GM12878 (cell line): ENCODE measurements at regions of chr1 and their contacts with region 1.

Region 1: GRCh38 chr1:23577056-23578004 is 18.0 kb upstream of the ID3 start:
- DNase-seq: peak; percentile 92
- ATAC-seq: peak; percentile 80
- H3K4me3 ChIP-seq: peak overlapping the region; percentile 61; the same call in 1 of the 2 replicates
- H3K27ac ChIP-seq: peak overlapping the region; percentile 96
- H3K4me1 ChIP-seq: peaks cover 53% of the 10 kb centered on the region
- H3K27me3 ChIP-seq: no peaks in the 10 kb centered on the region
- CTCF ChIP-seq: no peak
- EP300 ChIP-seq: peak; percentile 75 to 85; a peak in 3 of 4 replicates
- POLR2A ChIP-seq: 0 out of 2 replicates have a peak, but pooled peaks have one; percentile 20
- RAD21 ChIP-seq: peak; percentile 31; the same call in 1 of the 2 replicates

Region 2: DNA sequence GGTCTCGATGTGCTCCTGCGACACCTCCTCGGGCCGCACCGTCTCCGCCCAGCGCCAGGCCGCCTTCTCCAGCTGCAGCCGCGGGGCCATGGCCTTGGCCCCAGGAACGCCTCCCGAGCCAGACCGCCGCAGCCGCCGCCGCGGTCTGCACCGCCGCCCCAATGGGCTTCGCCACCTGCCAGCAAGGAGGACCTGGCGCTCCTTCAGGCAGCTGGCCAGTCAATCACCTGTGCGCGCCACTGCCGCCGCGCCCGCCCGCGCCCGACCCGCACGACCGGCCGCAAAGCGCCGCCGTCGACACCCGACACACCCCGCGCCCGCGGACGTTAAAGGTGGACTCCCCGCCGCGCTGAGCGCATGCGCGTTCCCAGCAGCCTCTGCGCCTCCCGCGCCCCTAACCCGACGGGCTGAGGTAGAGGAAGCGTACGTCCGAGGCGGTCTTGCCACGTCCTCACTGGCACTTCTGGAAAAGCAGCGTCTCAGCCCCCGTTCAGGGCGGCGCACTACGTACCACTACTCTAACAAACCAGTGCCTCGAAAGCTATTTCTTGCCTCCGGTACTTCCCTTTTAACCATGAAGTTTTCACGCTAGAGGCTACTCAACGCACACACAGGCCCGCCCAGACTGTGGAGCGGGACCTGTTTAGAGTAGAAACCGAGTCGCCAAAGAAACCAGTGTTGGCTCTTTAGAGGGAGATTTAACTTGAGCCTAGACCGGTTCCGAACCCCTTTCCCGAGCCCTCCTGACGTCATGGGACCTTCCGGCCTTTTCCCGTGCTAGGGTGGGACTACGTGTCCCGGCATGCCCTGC is 1794.3 kb before region 1 on chr1 and contains the start of gene USP48:
- CTCF ChIA-PET with region 1: no interaction called
- POLR2A ChIA-PET with region 1: no interaction called
- RAD21 ChIA-PET with region 1: no interaction called
- SMC1A ChIA-PET with region 1: no interaction called
- in situ Hi-C with region 1: loop called (anchors 25 kb)
- intact Hi-C with region 1: no loop called
- DNase-seq: peak; percentile 87
- ATAC-seq: peak; percentile 78
- H3K4me3 ChIP-seq: peak within 1 kb of the TSS; percentile 73
- H3K27ac ChIP-seq: peak within 1 kb of the TSS; percentile 100
- H3K4me1 ChIP-seq: 0 out of 2 replicates have a peak, but pooled peaks cover 4% of the 10 kb centered on the region
- H3K27me3 ChIP-seq: no peaks in the 10 kb centered on the region
- CTCF ChIP-seq: no peak
- EP300 ChIP-seq: peak in 1 of 2 experiments; percentile 22; a peak in 1 of 4 replicates
- POLR2A ChIP-seq: peak; percentile 100
- RAD21 ChIP-seq: 0 out of 2 replicates have a peak, but pooled peaks have one; percentile 1
- polyA plus RNA-seq, gene USP48: 21.2 to 39.0 TPM

Region 3: GRCh38 chr1:23548704-23549143 is 28.6 kb before region 1 on chr1:
- CTCF ChIA-PET with region 1: interaction called, 112 read pairs
- POLR2A ChIA-PET with region 1: interaction called, 49 read pairs
- RAD21 ChIA-PET with region 1: interaction called, 47 read pairs
- SMC1A ChIA-PET with region 1: interaction called, 216 read pairs
- in situ Hi-C with region 1: no loop called
- intact Hi-C with region 1: no loop called
- DNase-seq: no peak
- ATAC-seq: peak; percentile 52
- H3K4me3 ChIP-seq: no peak overlapping the region
- H3K27ac ChIP-seq: no peak overlapping the region
- H3K4me1 ChIP-seq: peaks cover 21% of the 10 kb centered on the region
- H3K27me3 ChIP-seq: no peaks in the 10 kb centered on the region
- CTCF ChIP-seq: no peak
- EP300 ChIP-seq: no peak
- POLR2A ChIP-seq: no peak
- RAD21 ChIP-seq: no peak

Region 4: GRCh38 chr1:23598424-23598823 is 21.1 kb after region 1 on chr1:
- CTCF ChIA-PET with region 1: interaction called, 64 read pairs
- POLR2A ChIA-PET with region 1: interaction called, 271 read pairs
- RAD21 ChIA-PET with region 1: interaction called, 252 read pairs
- SMC1A ChIA-PET with region 1: interaction called, 419 read pairs
- in situ Hi-C with region 1: no loop called
- intact Hi-C with region 1: loop called (anchors 1 kb)
- DNase-seq: no peak
- ATAC-seq: no peak
- H3K4me3 ChIP-seq: no peak overlapping the region
- H3K27ac ChIP-seq: no peak overlapping the region
- H3K4me1 ChIP-seq: peaks cover 79% of the 10 kb centered on the region
- H3K27me3 ChIP-seq: no peaks in the 10 kb centered on the region
- CTCF ChIP-seq: no peak
- EP300 ChIP-seq: no peak
- POLR2A ChIP-seq: no peak
- RAD21 ChIP-seq: no peak

Region 5: DNA sequence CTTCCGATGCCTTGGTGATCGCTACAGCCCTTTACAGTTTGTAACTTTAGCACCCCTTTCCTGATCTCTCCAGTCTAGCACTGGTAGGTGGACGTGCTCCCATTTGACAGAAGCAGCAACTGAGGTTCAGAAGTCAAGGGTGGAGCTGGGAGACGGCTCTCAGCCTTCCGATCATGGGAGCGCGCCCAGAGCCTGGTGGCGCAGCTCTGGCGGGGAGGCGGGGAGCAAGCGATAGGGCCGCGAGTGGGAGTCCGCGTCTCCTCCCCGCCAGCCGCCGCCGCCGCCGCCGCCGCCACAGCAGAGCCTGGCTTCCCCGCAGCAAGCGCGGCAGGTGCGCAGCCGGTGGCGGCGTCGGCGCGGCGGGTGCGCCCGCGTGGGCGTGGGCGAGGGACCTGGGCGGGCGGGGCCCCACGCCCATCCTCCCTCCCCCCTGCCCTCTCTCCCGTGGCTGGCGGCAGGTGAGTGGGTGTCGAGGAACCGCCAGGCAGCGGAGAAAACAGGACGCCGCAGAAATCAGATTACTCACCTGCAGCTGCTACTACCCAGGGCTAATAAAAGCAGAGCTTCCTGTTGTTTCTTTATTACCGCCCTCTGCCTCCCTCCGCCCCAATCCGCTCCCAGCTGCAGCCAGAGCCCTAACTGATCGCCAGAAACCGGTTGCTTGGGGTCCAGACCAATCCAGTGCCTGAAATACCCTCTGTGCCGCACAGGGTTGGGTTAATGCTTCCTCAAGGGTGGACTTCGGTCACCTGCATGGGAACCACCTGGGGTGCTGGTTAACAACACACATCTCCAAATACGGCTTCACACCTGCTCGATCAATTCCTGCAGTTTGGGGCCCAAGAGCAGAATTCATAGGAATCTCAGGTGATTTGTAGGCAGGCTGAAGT is 42.2 kb after region 1 on chr1:
- CTCF ChIA-PET with region 1: interaction called, 10 read pairs
- POLR2A ChIA-PET with region 1: interaction called, 24 read pairs
- RAD21 ChIA-PET with region 1: interaction called, 11 read pairs
- SMC1A ChIA-PET with region 1: interaction called, 24 read pairs
- in situ Hi-C with region 1: no loop called
- intact Hi-C with region 1: no loop called
- DNase-seq: no peak
- ATAC-seq: peak; percentile 82
- H3K4me3 ChIP-seq: peak overlapping the region; percentile 64
- H3K27ac ChIP-seq: peak overlapping the region; percentile 51
- H3K4me1 ChIP-seq: peaks cover 36% of the 10 kb centered on the region
- H3K27me3 ChIP-seq: no peaks in the 10 kb centered on the region
- CTCF ChIP-seq: no peak
- EP300 ChIP-seq: peak; percentile 50 to 67; a peak in 1 of 4 replicates
- POLR2A ChIP-seq: peak; percentile 64
- RAD21 ChIP-seq: no peak